A549 (cell line): ENCODE measurements at regions of chr22 and their contacts with region 1.

Region 1: GRCh38 chr22:37862570-37863325 is 13.5 kb downstream of the EIF3L start:
- DNase-seq: no peak
- ATAC-seq: peak; percentile 23 to 24; a peak in 3 of 6 replicates
- H3K4me3 ChIP-seq: no peak overlapping the region
- H3K27ac ChIP-seq: no peak overlapping the region
- H3K4me1 ChIP-seq: no peaks in the 10 kb centered on the region
- CTCF ChIP-seq: no peak
- EP300 ChIP-seq: no peak
- POLR2A ChIP-seq: no peak
- RAD21 ChIP-seq: no peak

Region 2: GRCh38 chr22:37708580-37709444 is 153.9 kb before region 1 on chr22:
- CTCF ChIA-PET with region 1: no interaction called
- POLR2A ChIA-PET with region 1: no interaction called
- DNase-seq: no peak
- ATAC-seq: no peak
- H3K4me3 ChIP-seq: no peak overlapping the region
- H3K27ac ChIP-seq: no peak overlapping the region
- H3K4me1 ChIP-seq: no peaks in the 10 kb centered on the region
- CTCF ChIP-seq: no peak
- EP300 ChIP-seq: no peak
- POLR2A ChIP-seq: no peak
- RAD21 ChIP-seq: no peak

Region 3: DNA sequence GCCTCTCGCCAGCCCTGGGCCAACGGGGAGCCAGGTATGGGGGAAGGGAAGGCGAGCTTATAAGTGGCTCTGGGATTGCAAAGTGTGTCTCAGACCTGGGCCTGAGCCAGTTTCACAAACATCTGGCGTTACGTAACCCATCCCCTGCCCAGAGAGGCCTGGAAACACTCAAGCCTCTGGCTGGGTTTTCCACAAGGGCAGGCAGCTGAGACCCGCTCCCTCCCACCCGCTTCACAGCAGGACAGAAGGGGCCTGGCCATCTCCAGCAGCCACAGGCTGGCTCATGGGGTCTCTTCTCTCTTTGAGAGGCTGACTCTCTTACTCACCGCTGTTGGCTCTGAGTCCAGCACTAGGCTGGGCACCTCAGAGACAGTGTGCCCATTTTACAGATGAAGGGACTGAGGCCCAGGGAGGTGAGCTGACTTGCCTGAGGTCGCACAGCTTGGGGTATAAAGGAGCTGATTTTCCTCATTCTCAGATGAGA is 121.4 kb before region 1 on chr22:
- CTCF ChIA-PET with region 1: no interaction called
- POLR2A ChIA-PET with region 1: no interaction called
- DNase-seq: peak; percentile 35 to 75
- ATAC-seq: peak; percentile 6 to 14; a peak in 3 of 6 replicates
- H3K4me3 ChIP-seq: no peak overlapping the region
- H3K27ac ChIP-seq: peak overlapping the region; percentile 60 to 100; a peak in 5 of 6 replicates
- H3K4me1 ChIP-seq: peaks cover 47% of the 10 kb centered on the region
- CTCF ChIP-seq: no peak
- EP300 ChIP-seq: no peak
- POLR2A ChIP-seq: no peak
- RAD21 ChIP-seq: no peak

Region 4: GRCh38 chr22:37777122-37777687 is 85.5 kb before region 1 on chr22:
- CTCF ChIA-PET with region 1: no interaction called
- POLR2A ChIA-PET with region 1: no interaction called
- DNase-seq: no peak
- ATAC-seq: no peak
- H3K4me3 ChIP-seq: no peak overlapping the region
- H3K27ac ChIP-seq: no peak overlapping the region
- H3K4me1 ChIP-seq: peaks cover 12% of the 10 kb centered on the region; the same call in 2 of the 3 replicates
- CTCF ChIP-seq: no peak
- EP300 ChIP-seq: no peak
- POLR2A ChIP-seq: no peak
- RAD21 ChIP-seq: no peak

Region 5: GRCh38 chr22:37807410-37808293 is 55.1 kb before region 1 on chr22 and contains the start of gene GCAT:
- CTCF ChIA-PET with region 1: interaction called, 10 read pairs
- POLR2A ChIA-PET with region 1: interaction called, 3 read pairs
- DNase-seq: peak; percentile 91 to 94
- ATAC-seq: peak; percentile 71 to 88
- H3K4me3 ChIP-seq: peak within 1 kb of the TSS; percentile 69
- H3K27ac ChIP-seq: peak within 1 kb of the TSS; percentile 55 to 99; a peak in 5 of 6 replicates
- H3K4me1 ChIP-seq: peaks cover 20% of the 10 kb centered on the region
- CTCF ChIP-seq: no peak
- EP300 ChIP-seq: no peak
- POLR2A ChIP-seq: peak; percentile 28; the same call in 1 of the 2 replicates
- RAD21 ChIP-seq: no peak
- polyA plus RNA-seq, gene GCAT: 1.2 and 1.3 TPM in 2 replicates

Region 6: GRCh38 chr22:37824674-37825641 is 37.8 kb before region 1 on chr22:
- CTCF ChIA-PET with region 1: interaction called, 112 read pairs
- POLR2A ChIA-PET with region 1: no interaction called
- DNase-seq: no peak
- ATAC-seq: no peak
- H3K4me3 ChIP-seq: no peak overlapping the region
- H3K27ac ChIP-seq: no peak overlapping the region
- H3K4me1 ChIP-seq: no peaks in the 10 kb centered on the region
- CTCF ChIP-seq: no peak
- EP300 ChIP-seq: no peak
- POLR2A ChIP-seq: no peak
- RAD21 ChIP-seq: no peak

Region 7: GRCh38 chr22:37849089-37849751 is 13.5 kb before region 1 on chr22 and contains the start of gene EIF3L:
- CTCF ChIA-PET with region 1: interaction called, 46 read pairs
- POLR2A ChIA-PET with region 1: interaction called, 6 read pairs
- DNase-seq: peak; percentile 90
- ATAC-seq: peak; percentile 92 to 95
- H3K4me3 ChIP-seq: peak within 1 kb of the TSS; percentile 86
- H3K27ac ChIP-seq: peak within 1 kb of the TSS; percentile 93 to 94
- H3K4me1 ChIP-seq: peaks cover 11% of the 10 kb centered on the region; the same call in 2 of the 3 replicates
- CTCF ChIP-seq: no peak
- EP300 ChIP-seq: no peak
- POLR2A ChIP-seq: peak; percentile 69
- RAD21 ChIP-seq: no peak
- polyA plus RNA-seq, gene EIF3L: 423 and 493 TPM in 2 replicates

Region 8: DNA sequence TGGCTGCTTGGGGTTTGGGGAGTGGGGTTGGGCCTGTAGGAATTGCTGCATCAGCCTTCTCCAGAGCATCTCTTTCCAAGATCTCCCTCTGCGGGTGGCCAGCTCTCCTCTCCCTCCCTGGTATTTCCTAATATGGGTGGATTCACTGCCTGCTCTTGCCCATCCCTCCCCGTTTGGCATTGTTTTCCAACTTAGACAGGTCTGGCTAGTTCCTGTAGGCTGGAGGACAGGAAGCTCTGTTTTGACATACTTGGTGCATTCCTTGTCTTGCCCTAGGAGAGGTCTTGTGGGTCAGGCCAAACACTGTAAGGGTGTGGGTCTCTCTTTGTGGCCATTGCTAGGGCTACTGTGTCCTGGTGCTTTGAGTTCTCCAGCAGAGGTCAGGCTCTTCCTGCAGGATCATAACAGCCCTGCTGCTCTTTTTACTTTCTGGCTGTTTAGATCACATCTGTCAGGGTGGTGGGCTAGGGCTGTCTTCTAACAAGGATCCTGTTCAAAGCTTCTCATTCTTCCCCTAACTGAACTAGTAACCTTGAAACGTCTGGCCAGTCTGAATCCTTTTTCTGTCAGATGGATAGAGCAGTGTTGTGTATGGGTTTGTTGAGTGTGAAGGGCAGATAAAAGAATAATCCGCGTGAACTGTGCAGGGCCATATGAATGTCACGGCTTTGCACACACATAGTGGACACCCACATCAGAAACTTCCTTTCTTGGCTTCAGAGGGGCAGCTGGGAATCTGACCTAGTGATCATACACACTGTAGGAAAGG is 25.0 kb after region 1 on chr22:
- CTCF ChIA-PET with region 1: interaction called, 15 read pairs
- POLR2A ChIA-PET with region 1: no interaction called
- DNase-seq: peak in 1 of 2 experiments; percentile 36
- ATAC-seq: peak; percentile 71 to 83; a peak in 3 of 6 replicates
- H3K4me3 ChIP-seq: no peak overlapping the region
- H3K27ac ChIP-seq: no peak overlapping the region
- H3K4me1 ChIP-seq: no peaks in the 10 kb centered on the region
- CTCF ChIP-seq: peak; percentile 20; the same call in 1 of the 3 replicates
- EP300 ChIP-seq: no peak
- POLR2A ChIP-seq: no peak
- RAD21 ChIP-seq: peak; percentile 12 to 21; a peak in 1 of 5 replicates

Region 9: GRCh38 chr22:37905534-37906363 is 43.0 kb after region 1 on chr22 and contains the start of gene MICALL1:
- CTCF ChIA-PET with region 1: interaction called, 13 read pairs
- POLR2A ChIA-PET with region 1: no interaction called
- DNase-seq: peak; percentile 51 to 64
- ATAC-seq: peak; percentile 79 to 84
- H3K4me3 ChIP-seq: peak within 1 kb of the TSS; percentile 95
- H3K27ac ChIP-seq: peak within 1 kb of the TSS; percentile 99
- H3K4me1 ChIP-seq: peaks cover 28% of the 10 kb centered on the region
- CTCF ChIP-seq: peak; percentile 52
- EP300 ChIP-seq: no peak
- POLR2A ChIP-seq: peak; percentile 28; the same call in 1 of the 2 replicates
- RAD21 ChIP-seq: no peak; a peak in 1 of 5 replicates
- polyA plus RNA-seq, gene MICALL1: 10.4 and 11.1 TPM in 2 replicates

Region 10: DNA sequence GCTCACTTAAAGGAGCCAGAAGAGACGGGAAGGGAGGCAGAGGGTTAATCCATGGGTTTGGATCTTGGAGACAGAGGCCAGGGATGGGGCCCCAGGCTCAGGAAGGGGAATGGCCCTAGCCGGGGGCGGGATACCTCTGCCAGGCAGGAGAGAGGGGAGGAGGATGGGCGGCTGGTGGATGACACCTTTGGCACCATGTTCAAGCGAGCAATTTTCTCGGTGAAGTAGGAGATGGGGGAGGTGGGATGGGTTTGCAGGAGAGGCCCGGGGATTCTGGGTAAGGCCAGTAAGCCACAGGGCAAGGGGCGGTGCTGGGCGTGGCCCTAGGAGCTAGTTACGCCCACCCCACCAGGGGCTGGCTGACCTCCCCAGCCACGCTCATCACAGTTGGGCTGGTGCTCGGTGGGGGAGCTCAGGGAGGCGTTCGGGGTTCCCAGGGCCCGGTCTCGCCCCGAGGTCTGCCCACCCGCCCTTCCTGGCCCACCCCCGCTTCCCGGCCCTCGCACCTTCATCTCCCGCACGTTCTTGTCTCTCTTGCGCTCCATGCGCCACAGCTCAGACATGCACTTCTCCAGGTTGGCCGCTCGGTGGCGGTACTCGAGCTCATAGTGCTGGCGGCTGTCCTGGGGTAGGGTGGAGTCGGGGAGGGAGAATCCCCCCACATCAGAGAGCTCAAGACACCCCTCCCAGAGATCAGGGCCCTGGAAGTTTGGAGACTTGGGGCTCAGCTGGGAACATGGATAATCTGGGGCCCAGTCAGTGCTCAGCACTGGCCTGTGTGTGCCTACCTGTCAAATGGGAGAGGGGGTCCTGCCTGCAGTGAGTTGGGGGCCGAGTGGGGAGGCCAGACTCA is 235.0 kb after region 1 on chr22:
- CTCF ChIA-PET with region 1: no interaction called
- POLR2A ChIA-PET with region 1: no interaction called
- DNase-seq: no peak
- ATAC-seq: peak in 1 of 2 experiments; percentile 75; a peak in 3 of 6 replicates
- H3K4me3 ChIP-seq: no peak overlapping the region
- H3K27ac ChIP-seq: no peak overlapping the region
- H3K4me1 ChIP-seq: 0 out of 3 replicates have a peak, but pooled peaks cover 8% of the 10 kb centered on the region
- CTCF ChIP-seq: no peak
- EP300 ChIP-seq: no peak
- POLR2A ChIP-seq: no peak
- RAD21 ChIP-seq: no peak; a peak in 1 of 5 replicates